Posterior vena cava (tissue), 2 donors: ENCODE measurements at regions of chr10 and their contacts with region 1.

Region 1: DNA sequence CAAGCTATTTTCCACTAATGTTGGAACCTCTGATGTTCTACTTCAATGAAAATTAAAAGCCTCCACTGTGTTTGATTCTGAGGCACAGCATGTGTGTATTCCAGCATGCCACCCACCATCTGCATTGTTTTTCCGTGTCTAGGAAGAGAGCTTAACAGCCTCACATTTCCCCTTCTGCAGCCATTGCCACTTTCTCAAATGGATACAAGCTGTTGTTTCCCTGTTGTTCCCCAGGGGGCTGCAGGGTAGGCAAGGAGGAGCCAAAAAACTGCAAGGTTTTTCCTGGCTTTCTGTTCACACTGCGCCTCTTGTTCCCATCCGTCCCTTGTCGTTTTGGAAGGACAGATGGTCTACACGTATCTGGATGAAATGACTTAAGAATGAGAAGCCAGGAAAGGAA is 72.3 kb upstream of the DNAJB12 start:
- DNase-seq: no peak

Region 2: GRCh38 chr10:72319416-72320254 is 107.4 kb before region 1 on chr10:
- intact Hi-C with region 1: no loop called
- DNase-seq: peak; percentile 99

Region 3: GRCh38 chr10:72375585-72375984 is 51.4 kb before region 1 on chr10:
- intact Hi-C with region 1: no loop called
- DNase-seq: no peak

Region 4: DNA sequence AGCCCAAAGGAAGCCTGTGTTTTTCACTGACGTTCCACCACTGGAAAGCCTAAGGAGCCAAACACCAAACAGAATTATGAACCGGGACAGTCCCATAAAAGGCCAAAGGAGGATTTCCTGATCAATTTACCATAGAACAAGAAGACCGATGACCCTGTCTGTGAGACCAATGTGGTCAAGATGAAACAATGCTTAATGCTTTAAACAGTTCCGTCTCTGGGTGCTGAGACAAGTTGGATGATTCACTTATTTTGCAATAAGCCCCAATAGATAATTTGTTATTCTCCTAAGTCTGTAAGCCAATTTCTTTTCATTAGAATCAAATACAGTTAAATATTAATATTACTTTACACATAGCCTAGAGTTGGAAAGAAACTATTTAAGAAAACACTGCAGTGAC is 64.0 kb after region 1 on chr10:
- intact Hi-C with region 1: loop called in 1 of 2 experiments (anchors 2 kb)
- DNase-seq: no peak

Region 5: DNA sequence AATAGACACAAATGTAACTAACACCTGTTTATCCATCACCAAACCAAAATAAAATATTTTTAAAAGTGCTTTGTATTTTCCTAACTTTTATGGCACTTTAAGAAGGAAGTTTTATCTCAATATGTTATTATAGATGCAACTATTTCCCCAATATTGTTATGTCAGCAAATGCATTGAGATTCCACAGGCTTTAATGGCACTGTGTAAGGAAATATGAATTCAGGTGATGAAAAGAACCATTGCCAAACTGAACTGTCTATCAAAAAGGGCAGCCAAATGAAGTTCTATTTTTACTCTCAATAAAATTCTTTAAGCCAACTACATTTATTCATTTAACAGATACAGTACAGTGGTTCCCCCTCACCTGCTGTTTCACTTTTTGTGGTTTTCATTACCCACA is 399.4 kb after region 1 on chr10:
- intact Hi-C with region 1: loop called in 1 of 2 experiments (anchors 5 kb)
- DNase-seq: no peak